IMR-90 (cell line): ENCODE measurements at regions of chr3 and their contacts with region 1.

Region 1: DNA sequence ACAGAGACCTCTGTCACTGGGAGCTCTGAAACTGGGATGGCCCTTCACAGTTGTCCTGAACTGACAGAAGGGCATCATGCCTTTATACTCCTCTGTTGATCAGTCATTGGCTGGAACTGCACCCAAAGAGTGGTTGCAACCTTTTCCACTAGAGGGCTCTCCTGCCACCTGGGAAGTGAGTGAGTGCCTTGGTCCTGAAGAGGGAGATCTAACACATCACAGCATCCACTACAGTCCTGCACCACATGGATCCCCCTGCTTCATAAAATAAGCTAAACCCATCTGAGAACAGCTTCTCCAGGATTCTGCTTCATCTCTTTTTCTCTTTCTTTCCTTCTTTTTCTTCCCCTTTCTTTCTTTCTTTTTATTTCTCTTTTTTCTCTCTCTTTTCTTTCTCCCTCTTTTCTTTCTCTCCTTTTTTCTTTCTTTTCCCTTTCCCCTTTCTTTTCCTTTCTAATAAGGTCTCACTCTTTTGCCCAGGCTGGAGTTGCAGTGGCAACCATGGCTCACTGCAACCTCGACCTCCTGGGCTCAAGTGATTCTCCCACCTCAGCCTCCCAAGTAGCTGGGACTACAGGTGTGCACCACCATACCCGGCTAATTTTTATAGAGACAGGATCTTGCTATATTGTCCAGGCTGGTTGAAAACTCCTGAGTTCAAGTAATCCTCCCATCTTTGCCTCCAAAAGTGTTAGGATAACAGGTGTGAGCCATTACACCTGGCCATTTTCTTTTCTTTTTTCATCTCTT is 42.8 kb upstream of the RAF1 start:
- DNase-seq: peak; percentile 74
- ATAC-seq: peak; percentile 95
- H3K4me3 ChIP-seq: no peak overlapping the region
- H3K27ac ChIP-seq: no peak overlapping the region
- H3K4me1 ChIP-seq: peaks cover 3% of the 10 kb centered on the region; the same call in 1 of the 2 replicates
- H3K27me3 ChIP-seq: peaks cover 8% of the 10 kb centered on the region; the same call in 1 of the 2 replicates
- CTCF ChIP-seq: peak; percentile 93
- POLR2A ChIP-seq: no peak
- RAD21 ChIP-seq: peak; percentile 80

Region 2: GRCh38 chr3:12004741-12005513 is 701.8 kb before region 1 on chr3:
- CTCF ChIA-PET with region 1: no interaction called
- POLR2A ChIA-PET with region 1: interaction called, 30 read pairs
- dilution Hi-C with region 1: no loop called
- in situ Hi-C with region 1: no loop called
- intact Hi-C with region 1: no loop called
- DNase-seq: no peak
- ATAC-seq: no peak
- H3K4me3 ChIP-seq: no peak overlapping the region
- H3K27ac ChIP-seq: no peak overlapping the region
- H3K4me1 ChIP-seq: no peaks in the 10 kb centered on the region
- H3K27me3 ChIP-seq: peaks cover 36% of the 10 kb centered on the region
- CTCF ChIP-seq: no peak
- POLR2A ChIP-seq: no peak
- RAD21 ChIP-seq: no peak

Region 3: GRCh38 chr3:12663936-12664908 is 42.5 kb before region 1 on chr3 and contains the start of gene RAF1:
- CTCF ChIA-PET with region 1: no interaction called
- POLR2A ChIA-PET with region 1: no interaction called
- dilution Hi-C with region 1: no loop called
- in situ Hi-C with region 1: no loop called
- intact Hi-C with region 1: loop called (anchors 5 kb)
- DNase-seq: peak; percentile 98
- ATAC-seq: peak; percentile 92
- H3K4me3 ChIP-seq: peak within 1 kb of the TSS; percentile 76
- H3K27ac ChIP-seq: peak within 1 kb of the TSS; percentile 95
- H3K4me1 ChIP-seq: peaks cover 9% of the 10 kb centered on the region
- H3K27me3 ChIP-seq: no peaks in the 10 kb centered on the region
- CTCF ChIP-seq: no peak
- POLR2A ChIP-seq: peak; percentile 88
- RAD21 ChIP-seq: 0 out of 2 replicates have a peak, but pooled peaks have one; percentile 11
- total RNA-seq, gene RAF1: 128 and 151 TPM in 2 replicates

Region 4: GRCh38 chr3:12810013-12810780 is 103.5 kb after region 1 on chr3:
- CTCF ChIA-PET with region 1: interaction called, 3 read pairs
- POLR2A ChIA-PET with region 1: no interaction called
- dilution Hi-C with region 1: no loop called
- in situ Hi-C with region 1: no loop called
- intact Hi-C with region 1: loop called (anchors 1 kb)
- DNase-seq: peak; percentile 81
- ATAC-seq: peak; percentile 100
- H3K4me3 ChIP-seq: peak overlapping the region; percentile 74
- H3K27ac ChIP-seq: no peak overlapping the region; the same call in 1 of the 2 replicates
- H3K4me1 ChIP-seq: peaks cover 2% of the 10 kb centered on the region; the same call in 1 of the 2 replicates
- H3K27me3 ChIP-seq: no peaks in the 10 kb centered on the region
- CTCF ChIP-seq: peak; percentile 67
- POLR2A ChIP-seq: no peak
- RAD21 ChIP-seq: peak; percentile 51

Region 5: GRCh38 chr3:12853191-12853741 is 146.6 kb after region 1 on chr3:
- CTCF ChIA-PET with region 1: no interaction called
- POLR2A ChIA-PET with region 1: no interaction called
- dilution Hi-C with region 1: no loop called
- in situ Hi-C with region 1: no loop called
- intact Hi-C with region 1: no loop called
- DNase-seq: peak; percentile 85
- ATAC-seq: peak; percentile 87
- H3K4me3 ChIP-seq: no peak overlapping the region
- H3K27ac ChIP-seq: no peak overlapping the region
- H3K4me1 ChIP-seq: peaks cover 4% of the 10 kb centered on the region; the same call in 1 of the 2 replicates
- H3K27me3 ChIP-seq: peaks cover 33% of the 10 kb centered on the region
- CTCF ChIP-seq: no peak
- POLR2A ChIP-seq: no peak
- RAD21 ChIP-seq: no peak

Region 6: GRCh38 chr3:12934431-12934830 is 227.8 kb after region 1 on chr3:
- CTCF ChIA-PET with region 1: no interaction called
- POLR2A ChIA-PET with region 1: no interaction called
- dilution Hi-C with region 1: no loop called
- in situ Hi-C with region 1: no loop called
- intact Hi-C with region 1: no loop called
- DNase-seq: no peak
- ATAC-seq: no peak
- H3K4me3 ChIP-seq: no peak overlapping the region
- H3K27ac ChIP-seq: no peak overlapping the region
- H3K4me1 ChIP-seq: peaks cover 9% of the 10 kb centered on the region; the same call in 1 of the 2 replicates
- H3K27me3 ChIP-seq: no peaks in the 10 kb centered on the region
- CTCF ChIP-seq: no peak
- POLR2A ChIP-seq: no peak
- RAD21 ChIP-seq: no peak